ENCODE measurements at regions of chr13 and their contacts with region 1.

Region 1: GRCh38 chr13:28819735-28820098 is 422 bp upstream of the MTUS2 start:
- DNase-seq: peak; percentile 81
- ATAC-seq: peak; percentile 85
- H3K4me3 Mint-ChIP-seq: peak overlapping the region; percentile 69
- H3K27ac Mint-ChIP-seq: no peak overlapping the region
- H3K4me1 Mint-ChIP-seq: peaks cover 8% of the 10 kb centered on the region; the same call in 1 of the 2 replicates
- H3K27me3 Mint-ChIP-seq: peaks cover 73% of the 10 kb centered on the region
- CTCF ChIP-seq: peak; percentile 29; the same call in 1 of the 2 replicates

Region 2: GRCh38 chr13:28805193-28805819 is 14.4 kb before region 1 on chr13:
- CTCF ChIA-PET with region 1: interaction called, 16 read pairs
- POLR2A ChIA-PET with region 1: no interaction called
- DNase-seq: peak; percentile 83
- ATAC-seq: peak; percentile 68
- H3K4me3 Mint-ChIP-seq: no peak overlapping the region
- H3K27ac Mint-ChIP-seq: no peak overlapping the region
- H3K4me1 Mint-ChIP-seq: no peaks in the 10 kb centered on the region
- H3K27me3 Mint-ChIP-seq: peaks cover 19% of the 10 kb centered on the region
- CTCF ChIP-seq: peak; percentile 81

Region 3: DNA sequence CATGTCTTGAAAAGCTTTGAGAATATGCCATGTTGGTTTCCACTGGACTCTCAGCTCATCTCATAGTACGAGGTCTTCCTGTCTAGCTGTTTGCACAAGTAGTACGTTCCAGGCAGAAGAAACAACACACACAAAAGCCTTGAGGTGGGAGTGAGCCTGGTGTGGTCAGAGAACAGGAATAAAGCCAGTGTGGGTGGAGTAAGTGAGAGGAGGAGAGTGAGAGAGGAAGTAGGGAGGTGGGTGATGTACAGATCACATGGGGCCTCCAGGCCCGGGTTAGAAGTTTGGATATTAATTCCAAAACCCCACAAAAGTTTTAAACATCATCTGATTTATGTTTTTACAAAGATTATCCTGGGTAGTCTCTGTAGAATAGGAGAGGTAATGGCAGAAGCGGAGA is 231.0 kb after region 1 on chr13:
- CTCF ChIA-PET with region 1: no interaction called
- POLR2A ChIA-PET with region 1: no interaction called
- DNase-seq: no peak
- ATAC-seq: no peak
- H3K4me3 Mint-ChIP-seq: no peak overlapping the region
- H3K27ac Mint-ChIP-seq: no peak overlapping the region; the same call in 1 of the 2 replicates
- H3K4me1 Mint-ChIP-seq: peaks cover 10% of the 10 kb centered on the region
- H3K27me3 Mint-ChIP-seq: no peaks in the 10 kb centered on the region
- CTCF ChIP-seq: no peak